ENCODE measurements at regions of chr5 and their contacts with region 1.

Region 1: GRCh38 chr5:62354028-62354874 is 48.2 kb downstream of the KIF2A start:
- DNase-seq: peak in 3 of 9 experiments; percentile 30 to 76 (median 69)
- ATAC-seq: peak; percentile 92
- H3K4me3 ChIP-seq: no peak overlapping the region
- H3K4me3 Mint-ChIP-seq: no peak overlapping the region
- H3K27ac ChIP-seq: no peak overlapping the region
- H3K27ac Mint-ChIP-seq: peak overlapping the region; percentile 55
- H3K4me1 ChIP-seq: peaks cover 13% of the 10 kb centered on the region
- H3K4me1 Mint-ChIP-seq: peaks cover 11% of the 10 kb centered on the region
- H3K27me3 ChIP-seq: no peaks in the 10 kb centered on the region
- H3K27me3 Mint-ChIP-seq: no peaks in the 10 kb centered on the region
- CTCF ChIP-seq: peak; percentile 96

Region 2: GRCh38 chr5:62297026-62297425 is 57.2 kb before region 1 on chr5:
- CTCF ChIA-PET with region 1: interaction called, 19 read pairs
- POLR2A ChIA-PET with region 1: interaction called, 6 read pairs
- intact Hi-C with region 1: loop called in 1 of 2 experiments (anchors 1 kb)
- DNase-seq: peak in 2 of 9 experiments; percentile 35 to 63
- ATAC-seq: peak; percentile 7
- H3K4me3 ChIP-seq: no peak overlapping the region
- H3K4me3 Mint-ChIP-seq: peak overlapping the region; percentile 46
- H3K27ac ChIP-seq: no peak overlapping the region
- H3K27ac Mint-ChIP-seq: peak overlapping the region; percentile 58
- H3K4me1 ChIP-seq: peaks cover 55% of the 10 kb centered on the region
- H3K4me1 Mint-ChIP-seq: peaks cover 69% of the 10 kb centered on the region
- H3K27me3 ChIP-seq: no peaks in the 10 kb centered on the region
- H3K27me3 Mint-ChIP-seq: no peaks in the 10 kb centered on the region
- CTCF ChIP-seq: no peak

Region 3: DNA sequence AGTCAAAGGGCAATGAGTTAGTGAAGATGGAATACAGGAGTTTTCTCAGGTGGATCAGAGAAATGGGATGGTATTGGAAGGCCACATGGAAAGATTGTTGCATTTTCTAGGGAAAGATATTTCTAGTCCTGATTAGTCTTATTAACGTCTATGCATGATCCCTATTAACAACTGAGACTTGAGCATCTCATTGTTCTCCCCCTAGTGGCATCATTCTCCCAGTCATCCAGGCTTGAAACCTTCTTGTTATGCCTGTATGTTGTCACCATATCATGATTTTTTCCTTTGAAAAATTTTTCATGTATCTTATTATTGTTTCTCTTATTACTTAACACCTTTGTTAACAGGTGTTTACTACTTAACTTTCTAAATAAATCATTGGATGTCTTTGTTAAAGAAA is 13.9 kb before region 1 on chr5:
- CTCF ChIA-PET with region 1: interaction called, 5 read pairs
- POLR2A ChIA-PET with region 1: interaction called, 6 read pairs
- intact Hi-C with region 1: loop called in 1 of 2 experiments (anchors 2 kb)
- DNase-seq: peak in 2 of 9 experiments; percentile 51 to 72
- ATAC-seq: peak; percentile 34
- H3K4me3 ChIP-seq: no peak overlapping the region
- H3K4me3 Mint-ChIP-seq: no peak overlapping the region
- H3K27ac ChIP-seq: no peak overlapping the region
- H3K27ac Mint-ChIP-seq: peak overlapping the region; percentile 21
- H3K4me1 ChIP-seq: peaks cover 27% of the 10 kb centered on the region
- H3K4me1 Mint-ChIP-seq: peaks cover 61% of the 10 kb centered on the region
- H3K27me3 ChIP-seq: no peaks in the 10 kb centered on the region
- H3K27me3 Mint-ChIP-seq: no peaks in the 10 kb centered on the region
- CTCF ChIP-seq: peak; percentile 8

Region 4: DNA sequence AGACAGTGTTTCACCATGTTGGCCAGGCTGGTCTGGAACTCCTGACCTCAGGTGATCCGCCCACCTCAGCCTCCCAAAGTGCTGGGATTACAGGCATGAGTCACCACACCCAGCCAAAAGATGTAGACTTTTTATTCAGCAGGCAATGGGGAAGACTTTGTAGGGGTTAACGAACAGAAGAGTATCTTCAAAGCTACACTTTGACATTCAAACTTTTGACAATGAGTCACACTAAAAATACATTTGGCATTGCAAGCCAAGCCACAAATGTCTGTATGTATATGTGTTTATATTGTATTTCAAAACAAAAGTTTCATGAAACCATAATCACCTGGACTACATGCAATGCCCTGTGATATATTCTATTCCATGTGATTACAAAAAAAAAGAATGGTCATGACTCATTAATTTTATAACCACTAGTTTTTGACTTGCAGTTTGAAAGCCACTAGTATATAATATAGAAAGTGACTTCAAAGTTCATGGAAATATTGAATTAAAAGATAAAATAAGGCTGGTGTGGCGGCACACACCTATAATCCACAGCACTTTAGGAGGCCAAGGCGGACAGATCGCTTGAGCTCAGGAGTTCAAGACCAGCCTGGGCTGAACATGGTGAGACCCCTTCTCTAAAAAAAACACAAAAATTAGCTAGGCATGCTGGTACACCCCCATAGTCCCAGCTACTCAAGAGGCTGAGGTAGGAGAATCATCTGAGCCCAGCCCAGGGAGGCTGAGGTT is 41.1 kb after region 1 on chr5:
- CTCF ChIA-PET with region 1: interaction called, 3 read pairs
- POLR2A ChIA-PET with region 1: no interaction called
- intact Hi-C with region 1: loop called (anchors 5 kb)
- DNase-seq: no peak
- ATAC-seq: peak; percentile 17
- H3K4me3 ChIP-seq: no peak overlapping the region
- H3K4me3 Mint-ChIP-seq: no peak overlapping the region
- H3K27ac ChIP-seq: no peak overlapping the region
- H3K27ac Mint-ChIP-seq: peak overlapping the region; percentile 27
- H3K4me1 ChIP-seq: peaks cover 14% of the 10 kb centered on the region
- H3K4me1 Mint-ChIP-seq: peaks cover 23% of the 10 kb centered on the region
- H3K27me3 ChIP-seq: no peaks in the 10 kb centered on the region
- H3K27me3 Mint-ChIP-seq: no peaks in the 10 kb centered on the region
- CTCF ChIP-seq: no peak

Region 5: GRCh38 chr5:62448528-62448927 is 94.3 kb after region 1 on chr5:
- CTCF ChIA-PET with region 1: no interaction called
- POLR2A ChIA-PET with region 1: no interaction called
- intact Hi-C with region 1: no loop called
- DNase-seq: no peak
- ATAC-seq: no peak
- H3K4me3 ChIP-seq: no peak overlapping the region
- H3K4me3 Mint-ChIP-seq: no peak overlapping the region
- H3K27ac ChIP-seq: no peak overlapping the region
- H3K27ac Mint-ChIP-seq: no peak overlapping the region
- H3K4me1 ChIP-seq: no peaks in the 10 kb centered on the region
- H3K4me1 Mint-ChIP-seq: peaks cover 3% of the 10 kb centered on the region
- H3K27me3 ChIP-seq: no peaks in the 10 kb centered on the region
- H3K27me3 Mint-ChIP-seq: no peaks in the 10 kb centered on the region
- CTCF ChIP-seq: no peak

Measured in CD8-positive, alpha-beta T cell (primary cell).